H1 (cell line): ENCODE measurements at regions of chr2 and their contacts with region 1.

Region 1: GRCh38 chr2:63849381-63850203 is 7.9 kb downstream of the UGP2 start:
- DNase-seq: peak in 1 of 2 experiments; percentile 58
- H3K4me3 ChIP-seq: peak overlapping the region in 3 of 4 experiments; percentile 14 to 60 (median 33); a peak in 5 of 8 replicates
- H3K27ac ChIP-seq: peak overlapping the region; percentile 76
- H3K4me1 ChIP-seq: peaks cover 18 to 60% (median 26%) of the 10 kb centered on the region in 4 experiments
- H3K27me3 ChIP-seq: no peaks in the 10 kb centered on the region
- CTCF ChIP-seq: no peak
- EP300 ChIP-seq: no peak
- POLR2A ChIP-seq: peak; percentile 25 to 79
- RAD21 ChIP-seq: no peak; a peak in 1 of 4 replicates

Region 2: DNA sequence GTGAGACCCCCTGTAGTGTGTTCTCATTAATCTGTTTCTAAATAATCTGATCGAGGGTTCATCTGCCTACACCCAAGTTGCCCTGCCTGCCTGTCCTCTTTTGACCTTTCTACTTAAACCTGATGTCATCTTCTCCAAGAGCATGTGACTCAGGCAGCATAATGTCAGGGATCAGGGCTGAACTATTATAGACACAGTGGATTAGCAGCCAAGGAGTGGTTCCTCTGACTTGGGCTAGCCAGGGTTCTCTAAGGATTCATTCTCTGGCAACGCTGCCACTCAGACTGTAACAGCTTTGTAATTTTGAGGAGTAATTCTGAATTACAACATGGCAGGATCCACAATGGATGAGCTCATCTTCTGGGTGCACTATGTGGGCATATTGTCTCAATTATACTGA is 136.8 kb before region 1 on chr2:
- CTCF ChIA-PET with region 1: no interaction called
- POLR2A ChIA-PET with region 1: no interaction called
- DNase-seq: no peak
- H3K4me3 ChIP-seq: no peak overlapping the region
- H3K27ac ChIP-seq: no peak overlapping the region
- H3K4me1 ChIP-seq: no peaks in the 10 kb centered on the region
- H3K27me3 ChIP-seq: no peaks in the 10 kb centered on the region
- CTCF ChIP-seq: no peak
- EP300 ChIP-seq: no peak
- POLR2A ChIP-seq: no peak
- RAD21 ChIP-seq: no peak

Region 3: DNA sequence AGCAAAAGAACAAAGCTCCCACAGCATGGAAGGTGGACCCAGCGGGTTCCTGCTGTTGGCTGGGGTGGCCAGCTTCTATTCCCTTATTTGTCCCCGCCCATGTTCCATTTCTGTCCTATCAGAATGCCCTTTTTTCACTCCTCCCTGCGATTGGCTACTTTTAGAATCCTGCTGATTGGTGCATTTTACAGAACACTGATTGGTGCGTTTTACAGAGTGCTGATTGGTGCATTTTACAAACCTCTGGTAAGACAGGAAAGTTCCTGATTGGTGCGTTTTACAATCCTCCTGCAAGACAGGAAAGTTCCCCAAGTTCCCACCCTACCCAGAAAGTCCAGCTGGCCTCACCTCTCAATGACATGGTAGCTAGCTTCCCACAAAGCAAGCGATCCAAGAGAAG is 48.1 kb before region 1 on chr2:
- CTCF ChIA-PET with region 1: no interaction called
- POLR2A ChIA-PET with region 1: no interaction called
- DNase-seq: no peak
- H3K4me3 ChIP-seq: no peak overlapping the region
- H3K27ac ChIP-seq: no peak overlapping the region
- H3K4me1 ChIP-seq: peaks cover 0 to 6% (median under 1%) of the 10 kb centered on the region in 4 experiments; a peak in 2 of 7 replicates
- H3K27me3 ChIP-seq: no peaks in the 10 kb centered on the region
- CTCF ChIP-seq: no peak
- EP300 ChIP-seq: no peak
- POLR2A ChIP-seq: no peak
- RAD21 ChIP-seq: no peak

Region 4: GRCh38 chr2:63875131-63875527 is 25.5 kb after region 1 on chr2:
- CTCF ChIA-PET with region 1: interaction called, 4 read pairs
- POLR2A ChIA-PET with region 1: interaction called, 47 read pairs
- DNase-seq: no peak
- H3K4me3 ChIP-seq: no peak overlapping the region
- H3K27ac ChIP-seq: no peak overlapping the region
- H3K4me1 ChIP-seq: peaks cover 0 to 19% (median 7%) of the 10 kb centered on the region in 4 experiments; a peak in 4 of 7 replicates
- H3K27me3 ChIP-seq: no peaks in the 10 kb centered on the region
- CTCF ChIP-seq: no peak
- EP300 ChIP-seq: no peak
- POLR2A ChIP-seq: peak; percentile 11 to 76; a peak in 1 of 3 replicates
- RAD21 ChIP-seq: no peak

Region 5: GRCh38 chr2:63962186-63962585 is 112.6 kb after region 1 on chr2:
- CTCF ChIA-PET with region 1: no interaction called
- POLR2A ChIA-PET with region 1: no interaction called
- DNase-seq: no peak
- H3K4me3 ChIP-seq: no peak overlapping the region
- H3K27ac ChIP-seq: no peak overlapping the region
- H3K4me1 ChIP-seq: no peaks in the 10 kb centered on the region
- H3K27me3 ChIP-seq: no peaks in the 10 kb centered on the region
- CTCF ChIP-seq: no peak
- EP300 ChIP-seq: no peak
- POLR2A ChIP-seq: no peak
- RAD21 ChIP-seq: no peak

Region 6: DNA sequence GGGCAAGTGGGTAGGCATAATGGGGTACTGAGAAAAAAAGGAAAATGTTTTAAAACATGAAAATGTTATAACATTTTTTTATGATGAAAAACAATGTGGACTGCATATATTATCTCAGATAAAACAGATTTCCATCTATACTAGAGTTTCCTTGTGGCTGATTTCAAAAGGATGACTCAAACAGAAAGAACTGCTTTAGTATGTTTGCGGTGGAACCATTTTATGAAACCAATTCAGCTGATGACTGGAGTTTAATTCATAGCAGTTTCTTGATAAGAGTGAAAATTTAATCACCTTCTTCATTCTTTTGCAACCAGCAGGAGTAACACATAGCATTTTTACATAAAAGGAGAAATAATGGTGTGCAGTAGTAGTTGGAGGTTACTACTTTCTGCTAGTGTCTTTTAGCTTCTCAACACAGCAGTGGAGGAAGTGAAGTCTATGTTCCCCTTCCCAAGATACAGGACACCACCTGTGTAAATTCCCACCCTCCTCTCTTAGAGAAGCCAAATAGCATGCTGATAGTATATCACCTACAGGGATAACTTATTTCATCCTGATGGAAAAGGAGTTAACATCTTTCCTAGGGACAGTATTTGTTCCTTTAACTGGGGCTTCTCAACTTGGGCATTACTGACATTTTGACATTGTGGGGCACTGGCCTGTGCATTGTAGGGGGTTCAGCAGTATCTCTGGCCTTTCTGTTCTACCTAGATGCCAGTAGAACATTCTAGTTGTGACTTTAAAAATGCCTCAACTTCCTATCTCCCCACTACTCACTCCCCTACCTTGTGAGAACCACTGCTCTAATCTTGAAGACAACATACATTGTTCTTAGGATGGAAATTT is 264.7 kb after region 1 on chr2:
- CTCF ChIA-PET with region 1: no interaction called
- POLR2A ChIA-PET with region 1: no interaction called
- DNase-seq: no peak
- H3K4me3 ChIP-seq: no peak overlapping the region
- H3K27ac ChIP-seq: no peak overlapping the region
- H3K4me1 ChIP-seq: peaks cover 0 to 5% (median 4%) of the 10 kb centered on the region in 4 experiments; a peak in 4 of 7 replicates
- H3K27me3 ChIP-seq: no peaks in the 10 kb centered on the region
- CTCF ChIP-seq: no peak
- EP300 ChIP-seq: no peak
- POLR2A ChIP-seq: no peak
- RAD21 ChIP-seq: no peak